ENCODE measurements at regions of chr7 and their contacts with region 1.

Region 1: DNA sequence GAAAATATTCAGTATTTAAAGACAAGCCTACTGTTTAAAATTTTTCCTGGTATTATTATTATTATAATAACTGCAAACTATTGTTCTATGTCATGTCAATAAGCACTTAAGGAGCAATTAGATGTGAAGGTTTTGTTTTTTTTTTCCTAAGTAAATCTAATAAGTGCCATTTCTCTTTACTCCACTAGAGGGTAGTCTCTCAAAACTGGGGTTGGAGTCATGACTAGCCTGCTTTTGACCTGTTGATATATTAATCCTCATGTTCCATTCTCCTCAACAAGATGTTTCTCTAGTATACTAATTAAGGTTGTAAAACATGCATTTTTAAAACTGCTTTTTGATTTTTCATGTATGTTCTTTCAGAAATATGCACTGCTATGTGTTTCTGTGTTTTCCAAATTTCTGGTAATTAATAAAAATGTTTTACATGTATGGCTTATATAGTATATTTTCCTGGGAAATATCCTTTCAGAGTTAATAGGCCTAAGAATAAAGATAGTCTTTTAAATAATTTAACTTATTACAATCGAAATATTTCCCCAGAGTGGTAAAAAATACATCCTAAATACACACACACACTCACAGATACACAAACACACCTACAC is 1.0 kb upstream of the LRRN3 start:
- H3K4me3 Mint-ChIP-seq: no peak overlapping the region
- H3K27ac Mint-ChIP-seq: no peak overlapping the region
- H3K4me1 Mint-ChIP-seq: no peaks in the 10 kb centered on the region
- H3K27me3 Mint-ChIP-seq: no peaks in the 10 kb centered on the region

Region 2: GRCh38 chr7:110084181-110084807 is 1005.6 kb before region 1 on chr7:
- intact Hi-C with region 1: no loop called
- H3K4me3 Mint-ChIP-seq: no peak overlapping the region
- H3K27ac Mint-ChIP-seq: no peak overlapping the region
- H3K4me1 Mint-ChIP-seq: no peaks in the 10 kb centered on the region
- H3K27me3 Mint-ChIP-seq: no peaks in the 10 kb centered on the region

Region 3: GRCh38 chr7:111168182-111168581 is 78.3 kb after region 1 on chr7:
- intact Hi-C with region 1: no loop called
- H3K4me3 Mint-ChIP-seq: no peak overlapping the region
- H3K27ac Mint-ChIP-seq: no peak overlapping the region
- H3K4me1 Mint-ChIP-seq: no peaks in the 10 kb centered on the region
- H3K27me3 Mint-ChIP-seq: no peaks in the 10 kb centered on the region

Region 4: DNA sequence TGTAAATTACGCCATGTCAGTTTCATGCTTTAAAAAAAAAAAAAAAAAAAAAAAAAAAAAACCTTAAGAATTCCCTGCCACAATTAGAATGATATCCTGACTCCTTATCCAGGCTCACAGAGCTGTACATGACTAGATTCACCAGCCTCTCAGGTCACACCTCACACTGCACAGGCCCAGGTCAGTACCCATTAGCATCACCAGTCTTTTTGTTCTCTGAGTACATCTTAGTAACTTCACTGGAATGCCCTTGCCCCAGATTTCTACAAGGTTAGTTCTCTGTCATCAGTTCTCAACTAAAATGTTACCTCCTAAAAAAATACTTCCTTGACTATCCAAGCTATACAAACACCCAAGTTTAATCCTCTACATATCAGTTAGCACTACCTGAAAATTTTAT is 212.0 kb after region 1 on chr7:
- intact Hi-C with region 1: loop called (anchors 10 kb)
- H3K4me3 Mint-ChIP-seq: no peak overlapping the region
- H3K27ac Mint-ChIP-seq: no peak overlapping the region
- H3K4me1 Mint-ChIP-seq: no peaks in the 10 kb centered on the region
- H3K27me3 Mint-ChIP-seq: no peaks in the 10 kb centered on the region

Region 5: DNA sequence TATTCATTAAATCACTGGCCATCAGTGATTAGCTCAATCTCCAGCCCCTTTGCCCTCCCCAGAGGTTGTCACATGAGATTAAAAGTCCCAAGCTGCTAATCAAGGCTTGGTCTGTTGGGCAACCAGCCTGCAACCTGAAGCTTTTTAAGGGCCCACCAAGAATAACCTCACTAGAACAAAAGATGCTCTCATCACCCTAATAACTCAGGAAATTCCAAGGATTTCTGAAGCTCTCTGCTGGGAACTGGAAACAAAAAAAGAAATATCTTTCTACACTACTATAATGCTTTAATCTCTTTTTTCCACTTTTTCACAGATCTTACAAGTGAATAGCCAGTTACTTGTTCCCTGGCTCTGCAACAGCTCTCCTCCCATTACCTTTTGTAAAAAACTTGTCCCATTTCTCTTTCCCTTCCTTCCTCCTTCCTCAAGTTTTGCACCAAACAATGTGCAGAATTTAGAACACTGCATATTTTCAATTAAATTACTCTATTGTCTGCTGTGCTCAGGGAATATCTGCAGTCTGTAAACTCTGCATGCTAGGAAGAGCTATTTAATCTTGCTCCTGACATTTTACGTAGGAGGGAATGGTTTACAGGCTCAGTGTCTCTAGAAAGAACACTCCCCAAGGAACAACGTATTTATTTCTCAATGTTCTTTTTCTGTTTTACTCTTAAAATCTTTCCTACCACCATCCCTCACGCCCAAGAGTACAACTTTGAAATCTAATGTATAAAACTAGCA is 303.3 kb after region 1 on chr7:
- intact Hi-C with region 1: no loop called
- H3K4me3 Mint-ChIP-seq: no peak overlapping the region
- H3K27ac Mint-ChIP-seq: no peak overlapping the region
- H3K4me1 Mint-ChIP-seq: peaks cover 5% of the 10 kb centered on the region
- H3K27me3 Mint-ChIP-seq: no peaks in the 10 kb centered on the region

Region 6: GRCh38 chr7:111486472-111487142 is 396.7 kb after region 1 on chr7:
- intact Hi-C with region 1: loop called (anchors 1 kb)
- H3K4me3 Mint-ChIP-seq: no peak overlapping the region
- H3K27ac Mint-ChIP-seq: no peak overlapping the region
- H3K4me1 Mint-ChIP-seq: no peaks in the 10 kb centered on the region
- H3K27me3 Mint-ChIP-seq: no peaks in the 10 kb centered on the region

Region 7: DNA sequence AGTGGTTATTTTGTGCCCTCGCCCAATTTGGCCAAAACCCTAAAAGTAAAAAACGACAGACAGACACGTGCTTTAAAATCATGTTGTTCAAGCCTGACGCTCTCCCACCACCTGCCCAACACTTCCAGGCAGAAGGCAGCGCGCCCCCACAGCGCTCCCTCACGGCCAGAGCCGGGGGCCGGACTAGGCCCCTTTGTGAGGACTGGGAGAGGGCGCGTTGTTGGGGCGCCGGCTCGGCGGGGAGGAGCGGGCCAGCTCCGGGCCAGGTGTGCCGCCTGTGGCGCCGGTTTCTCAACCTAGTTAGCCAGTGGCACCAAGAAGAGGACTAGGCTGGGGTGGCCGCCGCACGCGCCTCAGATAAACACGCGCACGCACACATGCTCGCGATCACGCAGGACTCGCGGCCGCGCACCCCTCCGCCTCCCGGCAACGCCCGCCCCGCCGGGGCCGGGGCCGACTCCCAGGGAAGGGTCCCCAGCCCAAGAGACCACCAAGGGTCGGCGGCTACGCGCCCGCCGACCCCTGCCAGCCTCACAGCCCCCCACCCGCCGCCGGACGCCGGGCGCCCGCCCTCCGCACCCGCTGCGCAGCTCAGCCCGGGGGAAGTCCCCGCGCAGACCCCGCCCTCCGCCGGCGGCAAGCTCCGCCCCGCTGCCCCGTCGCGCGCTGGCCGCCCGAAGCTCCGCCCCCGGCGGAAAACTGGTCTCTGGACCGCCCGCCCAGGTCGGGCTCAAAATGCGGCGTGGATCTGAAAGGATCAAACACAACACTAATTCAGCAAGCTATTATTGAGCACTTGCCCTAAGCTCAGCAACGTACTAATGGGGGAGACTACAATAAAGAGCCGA is 472.2 kb after region 1 on chr7 and contains the start of gene IMMP2L:
- intact Hi-C with region 1: loop called (anchors 5 kb)
- H3K4me3 Mint-ChIP-seq: peak within 1 kb of the TSS; percentile 81
- H3K27ac Mint-ChIP-seq: peak within 1 kb of the TSS; percentile 84
- H3K4me1 Mint-ChIP-seq: peaks cover 19% of the 10 kb centered on the region
- H3K27me3 Mint-ChIP-seq: peaks cover 8% of the 10 kb centered on the region

Region 8: GRCh38 chr7:111735661-111736551 is 646.0 kb after region 1 on chr7:
- intact Hi-C with region 1: loop called (anchors 10 kb)
- H3K4me3 Mint-ChIP-seq: no peak overlapping the region
- H3K27ac Mint-ChIP-seq: no peak overlapping the region
- H3K4me1 Mint-ChIP-seq: no peaks in the 10 kb centered on the region
- H3K27me3 Mint-ChIP-seq: no peaks in the 10 kb centered on the region